Right cardiac atrium (tissue), 5 donors: ENCODE measurements at regions of chr2 and their contacts with region 1.

Region 1: GRCh38 chr2:21118302-21118920 is 5.4 kb upstream of the TDRD15 start:
- DNase-seq: peak in 2 of 3 donors; percentile 14 to 39
- ATAC-seq: peak in 1 of 2 donors; percentile 50
- H3K4me3 ChIP-seq: no peak overlapping the region
- H3K27ac ChIP-seq: no peak overlapping the region
- H3K4me1 ChIP-seq: no peaks in the 10 kb centered on the region
- H3K27me3 ChIP-seq: no peaks in the 10 kb centered on the region

Region 2: DNA sequence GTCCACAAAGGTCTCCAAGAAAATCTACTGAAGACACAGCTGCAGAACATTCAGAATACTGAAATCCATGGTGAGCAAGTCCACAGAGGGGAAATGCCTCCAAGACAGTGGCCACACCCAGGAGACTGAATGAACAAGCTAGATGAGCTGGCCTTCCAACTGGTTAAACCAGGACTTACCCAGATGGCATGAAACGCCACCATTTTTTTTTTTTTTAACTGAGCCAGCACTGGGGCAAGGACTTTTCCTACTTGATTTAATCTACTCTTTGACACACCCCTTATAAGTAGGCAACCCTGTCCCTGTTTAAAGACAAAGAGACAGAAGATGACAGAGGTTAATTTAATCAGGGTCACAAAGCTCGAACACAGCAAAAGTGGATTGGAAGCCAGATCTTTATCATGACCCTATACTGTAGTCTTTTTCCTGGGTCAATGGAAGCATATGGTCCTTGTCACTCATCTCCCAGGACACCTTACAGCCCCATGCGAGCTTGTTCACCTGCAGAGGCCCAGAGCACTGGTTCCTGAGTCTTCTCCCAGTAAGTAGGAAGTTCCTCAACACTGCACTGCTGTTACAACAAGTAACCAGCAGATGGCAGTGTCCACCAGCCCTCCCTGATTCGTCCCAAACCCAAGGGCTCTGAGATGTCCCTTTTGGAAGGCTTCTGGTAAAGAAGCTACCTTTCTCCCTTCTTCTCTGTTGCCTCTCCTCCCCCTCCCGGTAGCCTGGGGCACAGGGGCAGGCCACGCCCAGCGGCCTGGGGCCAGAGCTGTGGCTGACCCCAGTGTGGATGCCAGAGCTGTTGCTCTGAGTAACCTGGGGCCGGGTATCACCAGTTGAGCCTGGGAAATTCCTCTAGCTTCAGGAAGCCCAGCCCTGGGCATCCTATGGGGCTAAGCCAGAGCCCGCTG is 457.1 kb before region 1 on chr2:
- intact Hi-C with region 1: loop called in 1 of 4 experiments (anchors 10 kb)
- DNase-seq: peak in 1 of 3 donors; percentile 74
- ATAC-seq: peak; percentile 72 to 75
- H3K4me3 ChIP-seq: no peak overlapping the region
- H3K27ac ChIP-seq: no peak overlapping the region
- H3K4me1 ChIP-seq: peaks cover 4% of the 10 kb centered on the region
- H3K27me3 ChIP-seq: no peaks in the 10 kb centered on the region

Region 3: DNA sequence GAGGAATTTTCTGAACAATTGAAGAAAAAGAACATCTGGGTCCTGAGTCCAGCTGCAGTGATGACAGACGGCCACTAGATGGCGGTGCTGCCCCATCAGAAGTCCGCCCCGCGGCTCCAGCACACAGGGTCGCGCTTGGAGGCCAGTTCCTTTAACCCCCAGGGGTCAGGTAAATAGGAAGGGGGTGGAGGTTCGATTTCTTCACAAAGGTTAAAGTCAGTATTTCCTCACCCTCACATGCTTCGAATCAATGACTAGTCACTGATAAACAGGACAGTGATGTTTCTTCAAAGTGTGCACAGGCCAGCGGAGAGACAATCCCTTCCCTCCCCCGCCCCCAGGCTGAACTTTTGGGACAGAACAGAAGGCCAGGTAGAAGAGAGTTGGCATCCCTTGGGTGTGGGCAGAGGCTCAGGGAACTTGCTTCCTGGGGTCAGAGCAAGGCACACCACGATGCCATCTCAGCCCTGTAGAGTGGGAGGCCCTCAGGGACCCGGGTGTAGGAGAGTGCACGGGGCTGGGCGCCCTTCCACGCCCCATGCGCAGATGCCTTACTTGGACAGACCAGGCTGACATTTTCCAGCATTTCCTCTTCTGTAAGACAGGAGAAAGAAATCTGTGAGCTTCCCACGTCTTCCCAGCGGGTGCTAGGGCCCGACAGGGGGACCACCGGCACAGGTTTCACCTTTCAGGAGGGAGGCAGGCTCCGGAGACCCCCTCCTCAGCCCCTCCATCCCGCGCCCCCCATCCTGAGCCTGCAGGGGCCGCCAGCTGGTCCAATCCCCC is 75.3 kb before region 1 on chr2:
- intact Hi-C with region 1: loop called (anchors 1 to 5 kb)
- DNase-seq: peak; percentile 55 to 83 (median 83)
- ATAC-seq: peak; percentile 45 to 67
- H3K4me3 ChIP-seq: no peak overlapping the region
- H3K27ac ChIP-seq: no peak overlapping the region
- H3K4me1 ChIP-seq: peaks cover 2% of the 10 kb centered on the region
- H3K27me3 ChIP-seq: no peaks in the 10 kb centered on the region

Region 4: GRCh38 chr2:21256006-21256405 is 137.6 kb after region 1 on chr2:
- intact Hi-C with region 1: no loop called
- DNase-seq: peak; percentile 33 to 61 (median 48)
- ATAC-seq: peak; percentile 83
- H3K4me3 ChIP-seq: no peak overlapping the region
- H3K27ac ChIP-seq: no peak overlapping the region
- H3K4me1 ChIP-seq: no peaks in the 10 kb centered on the region
- H3K27me3 ChIP-seq: no peaks in the 10 kb centered on the region